ENCODE measurements at regions of chr22 and their contacts with region 1.

Region 1: DNA sequence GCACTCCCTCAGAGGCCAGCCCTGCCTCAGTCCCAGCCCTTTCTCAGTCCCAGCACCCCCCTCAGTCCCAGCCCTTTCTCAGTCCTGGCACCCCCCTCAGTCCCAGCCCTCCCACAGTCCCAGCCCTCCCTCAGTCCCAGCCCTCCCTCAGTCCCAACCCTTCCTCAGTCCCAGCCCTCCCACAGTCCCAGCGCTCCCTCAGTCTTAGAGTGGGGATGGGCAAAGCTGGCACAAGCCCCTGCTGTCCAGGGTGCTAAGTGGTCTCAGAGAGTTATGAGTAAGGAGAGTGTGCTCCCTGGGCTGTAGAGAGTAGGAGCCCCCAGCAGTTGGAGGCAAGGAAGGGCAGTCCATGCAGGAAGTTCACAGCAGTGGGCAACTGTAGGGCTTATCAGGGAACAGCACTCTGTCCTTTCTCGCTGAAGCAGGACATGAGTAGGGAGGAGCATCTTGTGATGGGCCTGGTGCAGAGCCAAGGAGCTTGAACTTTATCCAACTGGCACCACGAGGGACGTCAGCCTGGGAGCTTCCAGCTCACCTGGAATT is 51.4 kb upstream of the CRYBB3 start:
- DNase-seq: no peak
- H3K4me3 ChIP-seq: no peak overlapping the region
- H3K27ac ChIP-seq: no peak overlapping the region
- H3K4me1 ChIP-seq: peaks cover 0 to 5% (median 0%) of the 10 kb centered on the region in 6 donors
- H3K27me3 ChIP-seq: no peaks in the 10 kb centered on the region
- CTCF ChIP-seq: no peak
- POLR2A ChIP-seq: no peak

Region 2: DNA sequence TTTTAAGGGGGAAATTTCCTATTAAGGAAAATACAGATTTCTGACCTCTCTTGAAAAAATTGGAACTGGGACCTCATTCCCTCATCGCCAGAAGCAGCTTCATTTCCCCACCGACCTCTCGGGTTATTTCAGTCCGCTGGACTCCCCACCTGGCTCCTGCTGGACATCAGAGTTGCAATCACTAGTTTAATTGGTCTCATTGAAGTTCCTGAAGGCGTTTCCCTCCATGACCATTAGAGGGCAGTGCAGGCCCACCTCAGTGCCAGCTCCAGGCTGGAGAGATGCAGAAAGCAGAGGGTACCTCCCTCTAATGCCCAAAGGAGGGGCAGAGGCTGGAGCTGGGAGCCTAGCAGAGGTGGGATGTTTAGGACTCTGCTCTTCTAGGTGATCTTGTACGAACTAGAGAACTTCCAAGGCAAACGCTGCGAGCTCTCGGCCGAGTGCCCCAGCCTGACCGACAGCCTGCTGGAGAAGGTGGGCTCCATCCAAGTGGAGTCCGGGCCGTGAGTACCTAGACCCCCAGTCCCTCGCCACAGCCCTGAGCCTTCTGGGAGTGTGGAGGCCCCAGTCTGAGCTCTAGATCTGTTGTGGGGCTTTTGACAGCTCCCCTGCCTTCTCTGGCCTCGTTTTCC is 54.2 kb after region 1 on chr22:
- intact Hi-C with region 1: loop called (anchors 10 kb)
- DNase-seq: no peak
- H3K4me3 ChIP-seq: no peak overlapping the region
- H3K27ac ChIP-seq: no peak overlapping the region
- H3K4me1 ChIP-seq: no peaks in the 10 kb centered on the region
- H3K27me3 ChIP-seq: peaks cover 0 to 6% (median 0%) of the 10 kb centered on the region in 7 donors
- CTCF ChIP-seq: peak; percentile 50 to 86 (median 80)
- POLR2A ChIP-seq: no peak